Ascending aorta (tissue), 2 donors: ENCODE measurements at regions of chr18 and their contacts with region 1.

Region 1: DNA sequence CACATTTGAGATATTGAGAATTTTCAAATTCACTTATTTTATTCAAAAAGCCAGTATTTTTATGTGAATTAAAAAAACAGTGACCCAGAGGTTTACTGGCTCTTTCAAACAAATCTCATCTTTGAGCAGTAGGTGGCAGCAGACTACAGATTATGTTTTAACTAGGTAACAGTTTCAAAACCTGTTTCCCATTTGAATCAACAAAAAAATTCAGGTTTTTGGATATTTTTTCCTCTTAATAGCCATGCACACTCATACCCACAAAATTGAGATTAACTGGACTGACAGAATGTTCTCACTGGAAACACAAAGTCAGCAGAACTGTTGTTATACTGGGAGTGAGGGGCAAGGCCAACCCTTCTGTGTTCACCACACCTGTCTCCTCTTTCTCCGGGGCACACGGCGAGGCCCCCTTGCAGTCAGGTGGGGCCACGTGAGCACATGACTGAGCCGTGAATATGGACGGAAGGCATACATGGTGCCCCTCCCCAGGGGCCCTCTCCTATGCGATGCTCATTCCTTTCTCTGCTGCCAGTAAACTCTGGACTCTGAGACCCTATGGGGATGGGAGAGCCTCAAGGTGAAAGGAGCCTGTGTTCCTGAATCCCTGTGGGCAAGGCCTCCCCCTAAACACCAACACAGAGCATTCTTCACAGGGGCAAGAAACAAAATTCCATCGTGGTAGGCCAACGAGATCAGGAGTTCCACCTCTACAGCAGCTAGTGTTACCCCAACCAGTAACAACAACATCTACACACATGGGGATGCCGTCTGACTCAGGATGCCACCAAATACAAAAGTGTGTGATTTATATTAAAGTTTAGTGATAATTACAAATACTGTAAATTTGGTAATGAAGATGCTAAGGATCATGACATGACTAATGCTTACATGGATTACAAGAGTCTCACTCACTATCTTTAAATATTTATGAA is 80.4 kb downstream of the LPIN2 start:
- DNase-seq: no peak
- H3K4me3 ChIP-seq: no peak overlapping the region
- H3K27ac ChIP-seq: no peak overlapping the region
- H3K4me1 ChIP-seq: peaks cover 0 to 11% of the 10 kb centered on the region in 2 donors
- H3K27me3 ChIP-seq: no peaks in the 10 kb centered on the region
- CTCF ChIP-seq: peak; percentile 66 to 72 (median 70)

Region 2: GRCh38 chr18:2636126-2636631 is 296.3 kb before region 1 on chr18:
- intact Hi-C with region 1: no loop called
- DNase-seq: no peak
- H3K4me3 ChIP-seq: no peak overlapping the region
- H3K27ac ChIP-seq: peak overlapping the region; percentile 44 to 59
- H3K4me1 ChIP-seq: no peaks in the 10 kb centered on the region
- H3K27me3 ChIP-seq: no peaks in the 10 kb centered on the region
- CTCF ChIP-seq: no peak

Region 3: DNA sequence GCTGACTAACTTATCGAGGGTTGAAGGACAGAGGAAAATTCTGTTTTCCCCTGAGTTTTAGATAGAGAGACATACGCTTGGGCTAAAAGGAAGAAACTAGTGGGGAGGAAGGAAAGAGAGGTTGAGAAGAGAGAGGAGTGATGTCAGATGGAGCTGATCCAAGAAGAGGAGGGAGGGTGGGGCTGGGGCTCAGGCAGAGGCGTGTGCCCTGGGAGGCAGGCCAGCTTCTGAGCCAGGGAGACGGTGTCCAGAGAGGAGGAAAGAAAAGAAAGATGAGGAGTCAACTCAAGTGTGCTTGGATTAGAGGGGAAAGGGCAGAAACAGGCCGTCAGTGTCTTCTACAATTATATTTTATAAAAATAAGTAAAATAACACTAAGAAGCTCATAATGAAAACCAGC is 29.5 kb before region 1 on chr18:
- intact Hi-C with region 1: no loop called
- DNase-seq: peak in 1 of 2 donors; percentile 75
- H3K4me3 ChIP-seq: no peak overlapping the region
- H3K27ac ChIP-seq: peak overlapping the region; percentile 47 to 59
- H3K4me1 ChIP-seq: peaks cover 0 to 6% of the 10 kb centered on the region in 2 donors
- H3K27me3 ChIP-seq: no peaks in the 10 kb centered on the region
- CTCF ChIP-seq: no peak

Region 4: DNA sequence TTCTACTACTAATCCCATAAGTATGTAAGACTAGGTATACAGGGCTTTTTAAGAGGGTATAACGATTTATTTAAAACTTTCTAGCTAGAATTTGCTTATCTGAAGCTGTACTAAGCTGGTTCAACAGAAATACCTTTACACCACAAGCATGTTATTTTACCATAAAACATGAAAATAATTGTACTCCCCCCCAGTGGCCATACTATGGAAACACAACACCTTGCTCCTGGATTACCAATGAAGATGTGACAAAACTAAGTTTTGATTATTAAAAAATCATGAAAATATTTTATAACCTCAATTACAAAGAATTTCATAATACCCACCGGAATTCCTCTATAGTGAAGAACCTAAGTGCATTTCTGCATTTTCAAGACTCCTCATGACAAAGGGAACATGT is 53.1 kb after region 1 on chr18:
- intact Hi-C with region 1: loop called (anchors 2 kb)
- DNase-seq: no peak
- H3K4me3 ChIP-seq: no peak overlapping the region
- H3K27ac ChIP-seq: no peak overlapping the region
- H3K4me1 ChIP-seq: peaks cover 0 to 21% of the 10 kb centered on the region in 2 donors
- H3K27me3 ChIP-seq: no peaks in the 10 kb centered on the region
- CTCF ChIP-seq: peak; percentile 26 to 52 (median 30)

Region 5: GRCh38 chr18:3062798-3063680 is 130.5 kb after region 1 on chr18:
- intact Hi-C with region 1: loop called (anchors 1 kb)
- DNase-seq: peak in 1 of 2 donors; percentile 81
- H3K4me3 ChIP-seq: peak overlapping the region in 1 of 2 donors; percentile 34
- H3K27ac ChIP-seq: no peak overlapping the region
- H3K4me1 ChIP-seq: peaks cover 0 to 3% of the 10 kb centered on the region in 2 donors
- H3K27me3 ChIP-seq: no peaks in the 10 kb centered on the region
- CTCF ChIP-seq: peak; percentile 55 to 78 (median 78)

Region 6: GRCh38 chr18:3129053-3129864 is 196.7 kb after region 1 on chr18:
- intact Hi-C with region 1: loop called (anchors 2 kb)
- DNase-seq: peak; percentile 26 to 88
- H3K4me3 ChIP-seq: no peak overlapping the region
- H3K27ac ChIP-seq: no peak overlapping the region
- H3K4me1 ChIP-seq: no peaks in the 10 kb centered on the region
- H3K27me3 ChIP-seq: no peaks in the 10 kb centered on the region
- CTCF ChIP-seq: peak; percentile 61 to 80 (median 73)

Region 7: GRCh38 chr18:3151399-3152264 is 219.1 kb after region 1 on chr18:
- intact Hi-C with region 1: loop called (anchors 5 kb)
- DNase-seq: no peak
- H3K4me3 ChIP-seq: no peak overlapping the region
- H3K27ac ChIP-seq: no peak overlapping the region
- H3K4me1 ChIP-seq: peaks cover 3 to 11% of the 10 kb centered on the region in 2 donors
- H3K27me3 ChIP-seq: no peaks in the 10 kb centered on the region
- CTCF ChIP-seq: peak; percentile 21 to 84 (median 80)